RWPE1 (cell line): ENCODE measurements at regions of chr9 and their contacts with region 1.

Region 1: GRCh38 chr9:132978451-132979131 is at the start of gene GFI1B:
- DNase-seq: no peak
- H3K27ac ChIP-seq: no peak within 1 kb of the TSS
- CTCF ChIP-seq: no peak

Region 2: GRCh38 chr9:132919614-132920268 is 58.9 kb before region 1 on chr9:
- CTCF ChIA-PET with region 1: no interaction called
- POLR2A ChIA-PET with region 1: no interaction called
- DNase-seq: no peak
- H3K27ac ChIP-seq: no peak overlapping the region
- CTCF ChIP-seq: no peak

Region 3: GRCh38 chr9:132994410-132995120 is 16.0 kb after region 1 on chr9:
- CTCF ChIA-PET with region 1: interaction called, 17 read pairs
- POLR2A ChIA-PET with region 1: no interaction called
- DNase-seq: peak; percentile 57
- H3K27ac ChIP-seq: no peak overlapping the region
- CTCF ChIP-seq: no peak

Region 4: GRCh38 chr9:133004091-133004998 is 25.8 kb after region 1 on chr9:
- CTCF ChIA-PET with region 1: interaction called, 10 read pairs
- POLR2A ChIA-PET with region 1: no interaction called
- DNase-seq: no peak
- H3K27ac ChIP-seq: no peak overlapping the region
- CTCF ChIP-seq: no peak